ENCODE measurements at regions of chr19 and their contacts with region 1.

Region 1: DNA sequence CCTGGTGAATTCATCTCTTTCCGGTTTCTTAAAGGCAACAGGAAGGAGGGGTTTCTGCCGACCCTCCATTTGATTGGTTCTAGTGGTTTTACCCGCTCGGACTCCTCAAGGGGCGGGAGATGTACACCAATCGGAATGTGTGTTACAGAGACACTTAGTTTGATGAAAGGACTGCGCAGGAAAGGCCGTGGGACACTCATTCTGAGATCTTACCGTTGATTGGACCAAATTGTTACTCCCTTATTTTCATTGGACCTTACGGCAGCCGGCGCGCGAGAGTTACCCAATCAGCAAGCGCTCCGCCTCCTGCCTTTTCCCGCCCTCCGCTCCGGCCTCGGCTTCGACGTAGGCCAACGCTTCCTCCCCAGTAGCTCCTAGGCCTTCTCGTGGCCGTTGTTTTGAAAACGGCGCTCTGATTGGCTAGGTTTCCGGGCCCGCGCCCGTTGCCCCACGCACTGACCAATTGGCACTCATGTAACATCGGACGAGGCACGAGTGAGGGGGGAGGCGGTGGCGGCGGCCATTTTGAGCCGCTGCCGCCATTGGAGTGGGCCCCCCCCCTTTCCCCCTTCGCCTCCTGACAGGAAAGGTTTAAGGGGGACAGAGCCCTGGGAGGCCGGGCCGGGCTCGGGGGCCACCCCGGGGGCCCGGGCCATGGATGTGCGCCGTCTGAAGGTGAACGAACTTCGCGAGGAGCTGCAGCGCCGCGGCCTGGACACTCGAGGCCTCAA is at the start of gene HNRNPUL1:
- DNase-seq: peak; percentile 99 to 100 (median 100)
- ATAC-seq: peak; percentile 76
- H3K4me3 ChIP-seq: peak within 1 kb of the TSS; percentile 84
- H3K4me3 Mint-ChIP-seq: peak within 1 kb of the TSS; percentile 95 to 100 (median 98)
- H3K27ac ChIP-seq: peak within 1 kb of the TSS; percentile 99
- H3K27ac Mint-ChIP-seq: peak within 1 kb of the TSS; percentile 99 to 100 (median 100)
- H3K4me1 ChIP-seq: peaks cover 22 to 30% of the 10 kb centered on the region in 2 donors
- H3K4me1 Mint-ChIP-seq: peaks cover 33 to 61% (median 41%) of the 10 kb centered on the region in 7 donors
- H3K27me3 ChIP-seq: no peaks in the 10 kb centered on the region
- H3K27me3 Mint-ChIP-seq: peaks cover 0 to 8% (median 0%) of the 10 kb centered on the region in 5 donors
- total RNA-seq, gene HNRNPUL1: 253 to 319 (median 280) TPM

Region 2: DNA sequence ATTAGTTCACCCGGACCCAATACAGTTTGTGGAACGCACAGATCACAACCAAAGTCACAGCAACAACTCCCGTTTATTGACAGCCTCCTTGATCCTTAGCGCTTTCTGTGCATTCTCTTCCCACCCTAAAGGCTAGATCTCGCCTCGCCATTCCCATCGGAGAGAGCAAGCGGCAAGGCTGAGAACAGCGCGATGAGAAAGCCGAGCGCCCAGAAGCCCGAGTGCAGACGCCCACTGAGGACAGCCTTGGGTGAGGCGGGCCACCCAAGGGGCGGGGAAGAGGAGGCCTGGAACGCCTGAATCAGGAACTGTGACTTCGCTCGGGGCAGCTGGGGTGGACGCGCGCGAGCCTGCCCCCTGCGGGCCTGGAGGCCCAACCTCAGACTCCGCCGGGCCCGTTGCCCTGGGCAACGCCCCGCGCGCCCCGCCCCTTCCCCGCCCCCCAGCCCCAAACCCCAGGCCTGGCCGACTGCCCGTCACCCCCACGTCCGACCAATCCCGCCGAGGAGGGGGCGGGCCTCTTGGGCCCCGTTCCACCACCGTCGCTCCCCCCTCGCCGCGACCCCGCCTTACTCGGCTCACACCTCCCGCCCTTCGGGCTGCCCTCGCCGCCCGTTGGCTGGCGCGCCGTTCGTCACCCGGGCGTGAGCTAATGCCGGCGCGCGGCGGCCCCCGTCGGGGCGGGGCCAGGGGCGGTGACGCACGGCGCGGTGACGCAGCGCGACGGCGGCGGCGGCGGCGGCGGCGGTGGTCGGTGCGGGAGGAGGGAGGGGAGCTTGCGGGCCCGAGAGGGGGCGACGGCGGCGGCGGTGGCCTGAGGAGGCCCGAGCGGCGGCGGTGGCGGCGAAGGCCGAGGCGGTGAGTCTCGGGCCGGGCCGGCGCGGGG is 1922.1 kb before region 1 on chr19 and contains the start of gene SAMD4B:
- CTCF ChIA-PET with region 1: no interaction called
- POLR2A ChIA-PET with region 1: interaction called, 5 read pairs
- intact Hi-C with region 1: loop called in 1 of 2 experiments (anchors 5 kb)
- DNase-seq: peak; percentile 97 to 100 (median 99)
- ATAC-seq: peak; percentile 93
- H3K4me3 ChIP-seq: peak within 1 kb of the TSS; percentile 95
- H3K4me3 Mint-ChIP-seq: peak within 1 kb of the TSS; percentile 90 to 100 (median 97)
- H3K27ac ChIP-seq: peak within 1 kb of the TSS; percentile 84
- H3K27ac Mint-ChIP-seq: peak within 1 kb of the TSS; percentile 90 to 97 (median 96)
- H3K4me1 ChIP-seq: peaks cover 23 to 42% of the 10 kb centered on the region in 2 donors
- H3K4me1 Mint-ChIP-seq: peaks cover 64 to 77% (median 73%) of the 10 kb centered on the region in 7 donors
- H3K27me3 ChIP-seq: no peaks in the 10 kb centered on the region
- H3K27me3 Mint-ChIP-seq: no peaks in the 10 kb centered on the region
- total RNA-seq, gene SAMD4B: 52.0 to 84.6 (median 65.6) TPM

Region 3: DNA sequence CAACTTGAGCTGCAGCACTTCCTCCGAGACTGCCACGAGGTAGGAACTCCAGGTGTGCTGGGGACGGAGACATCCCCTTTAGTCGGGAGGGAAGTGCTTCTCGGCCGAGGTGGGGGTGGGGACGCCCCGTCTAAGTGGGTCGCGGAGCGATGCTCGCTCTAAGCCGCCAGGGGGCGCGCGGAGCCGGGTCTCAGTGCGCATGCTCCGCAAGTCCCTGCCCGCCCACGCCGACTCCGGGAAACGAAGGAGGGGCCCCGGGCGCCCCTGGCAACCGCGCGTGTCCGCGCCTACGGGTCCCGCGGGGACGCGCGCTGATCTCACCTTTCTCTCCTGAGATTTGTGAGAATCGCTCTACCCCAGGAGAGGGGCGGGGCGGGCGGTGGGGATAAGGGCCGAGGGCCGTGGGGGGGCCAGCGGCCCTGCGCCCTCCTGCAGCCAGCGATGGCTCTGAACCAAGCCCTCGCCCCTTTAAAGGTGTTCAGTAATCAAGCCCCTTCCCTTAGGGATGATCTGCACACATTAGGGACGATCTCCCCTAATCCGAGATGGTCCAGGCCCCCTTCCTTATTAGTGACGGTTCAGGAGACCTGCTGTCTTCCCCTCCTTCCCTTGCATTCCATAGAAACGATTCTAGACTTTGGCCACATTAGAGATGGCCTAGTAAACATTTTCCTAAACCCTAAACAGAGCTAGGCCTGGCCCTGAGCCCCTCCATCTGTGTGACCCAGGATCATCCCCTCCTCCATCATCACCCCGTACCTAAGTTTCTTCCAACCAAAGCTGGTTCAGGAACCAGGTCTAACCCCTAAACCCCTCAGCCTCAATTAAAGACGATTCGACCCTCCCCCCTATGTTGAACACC is 734.7 kb before region 1 on chr19:
- CTCF ChIA-PET with region 1: interaction called, 3 read pairs
- POLR2A ChIA-PET with region 1: no interaction called
- intact Hi-C with region 1: loop called in 1 of 2 experiments (anchors 5 kb)
- DNase-seq: peak; percentile 84 to 97 (median 89)
- ATAC-seq: peak; percentile 97
- H3K4me3 ChIP-seq: peak overlapping the region; percentile 72
- H3K4me3 Mint-ChIP-seq: peak overlapping the region; percentile 66 to 87 (median 81)
- H3K27ac ChIP-seq: no peak overlapping the region
- H3K27ac Mint-ChIP-seq: peak overlapping the region in 6 of 9 donors; percentile 36 to 90 (median 60)
- H3K4me1 ChIP-seq: peaks cover 9 to 16% of the 10 kb centered on the region in 2 donors
- H3K4me1 Mint-ChIP-seq: peaks cover 5 to 25% (median 12%) of the 10 kb centered on the region in 7 donors
- H3K27me3 ChIP-seq: peaks cover 0 to 3% of the 10 kb centered on the region in 2 donors
- H3K27me3 Mint-ChIP-seq: peaks cover 13 to 37% (median 24%) of the 10 kb centered on the region in 5 donors

Region 4: DNA sequence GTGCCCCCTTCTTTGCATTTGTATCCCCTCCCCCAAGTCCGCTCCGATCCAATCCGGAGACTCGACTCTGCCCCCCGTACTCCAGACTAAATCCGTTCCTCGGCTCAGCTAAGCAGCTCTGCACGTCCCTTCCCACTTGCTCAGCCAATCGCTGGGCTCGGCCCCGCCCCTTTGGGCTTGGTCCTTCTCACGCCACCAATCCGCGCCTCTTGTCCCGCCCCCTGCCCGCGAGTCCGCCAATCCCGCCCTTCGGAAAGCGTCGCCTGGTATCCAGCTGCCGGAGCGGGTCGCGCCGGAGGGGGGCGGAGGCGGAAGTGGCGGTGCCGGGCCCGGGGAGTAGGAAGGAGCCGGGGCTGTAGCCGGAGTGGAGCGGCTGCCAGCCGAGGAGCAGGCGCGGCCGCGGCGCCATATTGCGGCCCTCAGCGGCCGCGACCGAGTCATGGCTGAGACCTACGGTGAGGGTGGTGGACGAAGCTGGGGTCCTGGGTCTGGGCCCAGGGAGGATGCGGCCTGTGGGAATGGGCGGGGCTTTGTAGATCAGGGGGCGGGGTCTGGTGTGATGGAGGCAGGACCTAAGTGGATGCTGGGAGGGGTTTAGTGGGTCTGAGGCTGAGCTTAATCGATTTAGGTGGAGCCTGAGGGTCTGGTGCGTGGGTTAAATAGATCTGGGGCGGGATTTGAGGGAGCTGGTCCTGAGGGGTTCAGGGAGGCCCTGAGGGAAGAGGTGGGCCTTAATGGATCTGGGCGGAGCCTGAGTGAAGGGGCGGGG is 485.9 kb before region 1 on chr19 and contains the start of gene RAB4B:
- CTCF ChIA-PET with region 1: no interaction called
- POLR2A ChIA-PET with region 1: interaction called, 16 read pairs
- intact Hi-C with region 1: loop called in 1 of 2 experiments (anchors 1 kb)
- DNase-seq: peak; percentile 99 to 100 (median 100)
- ATAC-seq: peak; percentile 92
- H3K4me3 ChIP-seq: peak within 1 kb of the TSS; percentile 97
- H3K4me3 Mint-ChIP-seq: peak within 1 kb of the TSS; percentile 91 to 99 (median 96)
- H3K27ac ChIP-seq: peak within 1 kb of the TSS; percentile 92
- H3K27ac Mint-ChIP-seq: peak within 1 kb of the TSS; percentile 87 to 99 (median 98)
- H3K4me1 ChIP-seq: peaks cover 18 to 24% of the 10 kb centered on the region in 2 donors
- H3K4me1 Mint-ChIP-seq: peaks cover 31 to 49% (median 39%) of the 10 kb centered on the region in 7 donors
- H3K27me3 ChIP-seq: no peaks in the 10 kb centered on the region
- H3K27me3 Mint-ChIP-seq: no peaks in the 10 kb centered on the region
- total RNA-seq, gene RAB4B: 37.6 to 63.0 (median 52.5) TPM

Region 5: DNA sequence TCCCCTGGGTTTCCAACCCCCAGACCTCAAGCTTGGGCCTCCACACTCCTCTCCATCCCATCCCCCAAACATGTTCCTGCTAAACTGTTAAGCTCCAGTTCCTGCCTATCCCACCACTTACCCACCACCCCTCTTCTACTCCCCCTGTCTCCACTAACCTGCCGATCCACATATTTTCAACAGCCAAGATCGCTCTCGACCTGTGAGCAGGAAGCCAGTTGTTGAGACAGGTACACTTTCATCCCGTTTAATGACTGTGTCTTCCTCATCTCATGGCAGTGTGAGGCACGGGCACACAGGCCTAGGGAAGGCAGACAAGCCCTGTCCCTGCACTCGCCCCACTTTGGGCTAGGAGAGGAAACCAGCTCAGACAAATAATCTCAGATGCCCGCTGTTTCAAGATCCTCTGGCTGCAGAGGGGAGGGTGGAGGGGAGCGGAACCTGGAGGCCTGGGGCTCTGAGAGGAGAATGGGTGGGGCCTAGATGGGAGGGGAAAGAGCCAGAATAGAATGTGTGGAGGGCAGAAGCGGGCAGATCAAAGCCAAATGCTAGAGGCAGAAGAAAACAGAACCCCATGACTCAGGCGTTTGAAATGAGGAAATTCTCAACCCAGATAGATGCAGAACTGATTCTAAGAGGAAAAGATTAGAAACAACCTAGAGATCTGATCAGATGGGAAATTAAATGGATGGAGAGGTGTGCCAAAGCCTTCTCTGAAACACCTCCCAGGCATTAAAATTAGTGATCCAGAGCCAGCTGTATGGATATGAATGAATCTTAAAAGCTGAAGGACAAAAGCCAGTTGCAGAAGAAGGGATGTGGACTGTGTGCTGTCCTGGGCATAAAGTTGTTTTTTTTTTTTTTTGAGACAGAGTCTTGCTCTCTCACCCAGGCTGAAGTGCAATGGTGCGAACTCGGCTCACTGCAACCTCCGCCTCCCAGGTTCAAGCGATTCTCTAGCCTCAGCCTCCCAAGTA is 87.9 kb before region 1 on chr19:
- CTCF ChIA-PET with region 1: no interaction called
- POLR2A ChIA-PET with region 1: interaction called, 11 read pairs
- intact Hi-C with region 1: no loop called
- DNase-seq: peak in 7 of 9 donors; percentile 22 to 64 (median 50)
- ATAC-seq: peak; percentile 95
- H3K4me3 ChIP-seq: no peak overlapping the region
- H3K4me3 Mint-ChIP-seq: peak overlapping the region; percentile 46 to 73 (median 64)
- H3K27ac ChIP-seq: peak overlapping the region; percentile 33
- H3K27ac Mint-ChIP-seq: peak overlapping the region; percentile 49 to 87 (median 79)
- H3K4me1 ChIP-seq: peaks cover 0 to 17% of the 10 kb centered on the region in 2 donors
- H3K4me1 Mint-ChIP-seq: peaks cover 7 to 24% (median 17%) of the 10 kb centered on the region in 7 donors
- H3K27me3 ChIP-seq: no peaks in the 10 kb centered on the region
- H3K27me3 Mint-ChIP-seq: no peaks in the 10 kb centered on the region

Region 6: GRCh38 chr19:41310033-41310758 is 46.2 kb after region 1 on chr19 and contains the start of gene CCDC97:
- CTCF ChIA-PET with region 1: interaction called, 35 read pairs
- POLR2A ChIA-PET with region 1: interaction called, 339 read pairs
- intact Hi-C with region 1: loop called (anchors 1 kb)
- DNase-seq: peak; percentile 85 to 94 (median 91)
- ATAC-seq: peak; percentile 72
- H3K4me3 ChIP-seq: peak within 1 kb of the TSS; percentile 72
- H3K4me3 Mint-ChIP-seq: peak within 1 kb of the TSS; percentile 93 to 100 (median 96)
- H3K27ac ChIP-seq: peak within 1 kb of the TSS; percentile 87
- H3K27ac Mint-ChIP-seq: peak within 1 kb of the TSS; percentile 94 to 99 (median 98)
- H3K4me1 ChIP-seq: peaks cover 51 to 60% of the 10 kb centered on the region in 2 donors
- H3K4me1 Mint-ChIP-seq: peaks cover 52 to 90% (median 69%) of the 10 kb centered on the region in 7 donors
- H3K27me3 ChIP-seq: no peaks in the 10 kb centered on the region
- H3K27me3 Mint-ChIP-seq: peaks cover 0 to 3% (median 0%) of the 10 kb centered on the region in 5 donors
- total RNA-seq, gene CCDC97: 35.9 to 56.5 (median 49.1) TPM

Region 7: DNA sequence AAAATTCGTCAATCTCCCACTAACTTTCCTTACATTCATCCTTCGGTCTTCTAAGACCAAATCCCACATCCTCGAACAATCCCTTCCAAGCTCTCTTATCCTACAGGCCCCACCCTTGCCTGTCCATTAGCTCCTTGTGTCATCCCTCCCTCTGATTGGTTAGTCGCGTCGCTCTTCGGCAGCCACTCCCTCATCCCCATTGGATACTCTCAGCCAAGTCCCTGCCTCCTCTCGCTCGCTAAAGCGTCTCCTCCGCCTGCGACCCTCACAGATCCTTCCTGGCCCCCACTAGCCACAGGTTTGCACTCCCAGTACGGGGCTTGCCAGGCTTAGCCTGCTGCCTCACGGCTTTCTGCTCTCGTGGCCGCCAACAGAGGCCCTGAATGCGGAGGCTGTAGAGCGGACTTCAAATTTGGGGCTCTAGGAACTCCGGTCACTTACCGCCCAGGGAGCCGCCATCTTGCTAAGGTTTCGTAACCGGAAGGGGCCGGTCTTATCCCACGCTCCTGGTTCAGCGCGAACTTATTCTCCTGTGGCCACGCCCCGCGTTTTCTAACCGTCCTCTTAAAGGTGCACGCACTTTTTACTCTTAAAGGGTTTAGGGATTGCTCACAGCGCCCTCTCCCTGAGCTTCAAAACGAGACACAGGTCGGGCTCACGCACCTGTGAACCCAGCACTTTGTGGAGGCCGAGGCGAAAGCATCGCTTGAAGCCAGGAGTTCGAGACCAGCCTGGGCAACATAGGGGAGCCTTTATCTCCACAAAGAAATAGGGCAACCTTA is 175.6 kb after region 1 on chr19 and contains the start of gene DMAC2:
- CTCF ChIA-PET with region 1: no interaction called
- POLR2A ChIA-PET with region 1: interaction called, 5 read pairs
- intact Hi-C with region 1: loop called (anchors 1 to 2 kb)
- DNase-seq: peak; percentile 65 to 94 (median 88)
- ATAC-seq: peak; percentile 100
- H3K4me3 ChIP-seq: peak within 1 kb of the TSS; percentile 96
- H3K4me3 Mint-ChIP-seq: peak within 1 kb of the TSS in 2 of 10 donors; percentile 49 to 54
- H3K27ac ChIP-seq: peak within 1 kb of the TSS; percentile 85
- H3K27ac Mint-ChIP-seq: peak within 1 kb of the TSS in 5 of 9 donors; percentile 3 to 89 (median 56)
- H3K4me1 ChIP-seq: peaks cover 7 to 12% of the 10 kb centered on the region in 2 donors
- H3K4me1 Mint-ChIP-seq: peaks cover 4 to 25% (median 6%) of the 10 kb centered on the region in 7 donors
- H3K27me3 ChIP-seq: no peaks in the 10 kb centered on the region
- H3K27me3 Mint-ChIP-seq: peaks cover 0 to 2% (median 0%) of the 10 kb centered on the region in 5 donors
- total RNA-seq, gene DMAC2: 22.2 to 44.4 (median 26.2) TPM